GM13977 (cell line): ENCODE measurements at regions of chr2 and their contacts with region 1.

Region 1: GRCh38 chr2:177332041-177332991 is 60.3 kb upstream of the AGPS start:
- DNase-seq: peak; percentile 42
- CTCF ChIP-seq: peak; percentile 68

Region 2: GRCh38 chr2:177164584-177165052 is 167.7 kb before region 1 on chr2:
- in situ Hi-C with region 1: loop called (anchors 5 kb)
- DNase-seq: peak; percentile 54
- CTCF ChIP-seq: peak; percentile 99

Region 3: DNA sequence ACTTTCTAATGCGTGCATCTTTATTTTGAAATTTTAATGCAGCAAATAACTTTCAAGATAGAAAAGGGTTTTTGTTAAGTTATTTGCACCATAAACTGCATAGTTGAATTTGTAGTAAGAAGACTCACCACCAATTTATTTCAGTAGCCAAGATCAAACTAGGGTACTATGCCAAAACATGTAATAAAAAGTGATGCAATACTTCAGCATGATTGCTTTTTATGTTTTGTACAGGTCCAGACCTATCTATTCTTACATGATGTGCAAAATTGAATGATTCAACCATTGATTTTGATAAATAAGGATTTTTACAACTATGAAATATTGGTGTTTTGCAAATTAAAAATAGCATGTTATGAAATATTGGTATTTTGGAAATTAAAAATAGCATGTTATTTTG is 87.0 kb after region 1 on chr2:
- in situ Hi-C with region 1: loop called (anchors 10 kb)
- DNase-seq: no peak
- CTCF ChIP-seq: no peak

Region 4: DNA sequence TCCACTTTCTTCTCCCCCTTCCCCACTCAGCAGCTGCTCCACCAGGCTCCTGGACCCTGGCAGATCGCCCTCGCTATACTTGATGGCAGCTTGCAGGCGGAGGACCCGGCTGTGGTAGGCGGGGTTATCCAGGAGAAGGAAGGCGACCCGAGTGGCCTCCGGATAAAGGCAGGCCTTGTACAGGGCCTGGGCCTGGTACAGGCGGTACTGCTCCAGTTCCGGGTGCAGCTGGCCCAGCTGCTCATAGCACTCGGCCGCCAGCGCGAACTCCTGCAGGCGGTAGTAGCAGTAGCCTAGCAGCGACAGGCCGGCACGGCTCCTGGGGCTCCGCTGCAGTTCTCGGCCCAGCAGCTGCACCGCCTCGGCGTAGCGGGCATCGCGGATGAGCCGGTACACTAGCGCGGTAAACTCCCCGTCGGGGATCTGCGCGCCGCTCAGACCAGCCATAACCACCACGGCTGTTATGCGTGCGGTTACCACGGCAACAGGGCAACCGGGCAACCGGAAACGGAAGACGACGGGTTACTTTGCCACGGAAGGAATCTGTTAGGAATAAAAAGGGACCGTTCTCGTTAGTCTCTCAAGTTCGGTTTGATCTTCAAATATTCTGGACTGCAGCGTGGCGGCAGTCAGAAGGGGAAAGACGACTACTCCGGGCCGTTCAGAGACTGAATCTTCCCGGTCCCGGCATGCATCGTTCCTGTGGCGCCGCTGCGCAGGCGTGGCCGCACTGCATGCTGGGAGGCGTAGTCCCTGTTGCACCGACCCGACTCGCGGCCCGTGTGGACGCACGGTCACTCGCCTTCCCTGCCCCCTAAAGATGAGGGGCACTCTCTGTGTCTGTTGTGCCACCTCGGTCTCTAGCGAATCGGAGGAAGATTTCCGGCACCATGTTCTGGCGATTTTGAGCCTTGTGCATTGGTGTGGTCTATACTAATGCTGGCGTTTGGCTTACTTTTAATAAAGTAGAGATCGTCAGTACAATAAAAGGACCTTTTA is 286.2 kb after region 1 on chr2:
- in situ Hi-C with region 1: loop called (anchors 25 kb)
- DNase-seq: peak; percentile 85
- CTCF ChIP-seq: no peak

Region 5: GRCh38 chr2:177724398-177725287 is 392.3 kb after region 1 on chr2:
- in situ Hi-C with region 1: loop called (anchors 10 kb)
- DNase-seq: peak; percentile 48
- CTCF ChIP-seq: peak; percentile 88

Region 6: DNA sequence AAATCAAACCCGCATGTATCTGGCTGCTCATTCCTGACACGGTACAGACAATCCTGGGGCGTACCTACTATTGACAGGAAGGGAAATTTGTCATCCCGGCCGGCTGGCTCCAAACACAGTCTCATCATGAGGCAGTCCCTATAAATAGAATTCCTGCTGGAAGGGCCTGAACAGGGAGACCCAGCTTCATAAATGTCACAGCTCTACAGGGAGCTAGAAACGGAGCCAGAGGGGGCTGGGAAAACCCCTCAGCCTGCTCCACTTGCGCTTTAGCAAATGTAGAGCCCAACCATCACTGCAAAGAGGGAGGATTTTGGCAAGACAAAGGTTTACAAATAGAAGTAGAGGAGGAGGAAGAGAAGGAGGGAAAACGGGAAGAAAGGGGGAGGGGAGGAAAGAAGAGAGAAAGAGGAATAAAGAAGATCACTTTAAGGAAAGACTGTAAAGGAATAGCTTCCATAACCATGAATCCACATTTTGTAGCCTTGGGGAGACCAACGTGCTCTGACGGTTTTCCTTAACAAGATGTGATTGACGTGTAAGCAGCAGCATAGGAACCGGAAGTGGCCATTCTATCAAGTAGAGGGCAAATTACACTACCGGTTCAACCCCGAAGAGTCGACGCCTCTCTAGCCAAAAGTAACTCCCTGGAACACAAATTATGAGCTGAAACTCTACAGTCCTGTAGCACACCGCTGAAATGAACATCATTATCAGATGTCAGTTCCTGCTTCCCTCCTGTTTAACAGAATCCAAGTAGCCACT is 1531.7 kb after region 1 on chr2:
- in situ Hi-C with region 1: no loop called
- DNase-seq: no peak
- CTCF ChIP-seq: no peak